Activated B cell treated with CpG ODN at 0.5 μM for 24 hours (primary cell): ENCODE measurements at regions of chr12 and their contacts with region 1.

Region 1: DNA sequence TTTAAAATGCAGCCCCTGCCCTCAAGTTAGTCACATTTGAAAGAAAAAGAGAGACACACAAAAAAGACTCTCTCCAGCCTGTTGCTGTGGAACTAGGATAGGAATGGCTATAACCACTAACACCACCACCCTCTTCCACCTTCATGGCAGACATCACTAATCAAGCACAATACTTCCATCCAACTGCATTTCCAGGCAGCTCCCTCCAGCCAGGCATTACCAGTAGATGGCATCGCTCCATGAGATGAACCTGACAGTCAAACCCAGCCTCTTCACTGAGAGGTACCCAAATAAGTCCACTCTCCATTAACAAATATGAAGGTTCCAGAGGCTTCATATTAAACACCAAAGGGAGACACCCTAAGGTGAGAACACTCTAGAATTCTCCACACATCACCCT is 24.4 kb downstream of the SLC8B1 start:
- DNase-seq: no peak
- ATAC-seq: no peak
- H3K4me3 Mint-ChIP-seq: no peak overlapping the region
- H3K27ac Mint-ChIP-seq: no peak overlapping the region
- H3K4me1 Mint-ChIP-seq: no peaks in the 10 kb centered on the region
- H3K27me3 Mint-ChIP-seq: no peaks in the 10 kb centered on the region
- CTCF ChIP-seq: no peak

Region 2: GRCh38 chr12:111927346-111927745 is 1383.1 kb before region 1 on chr12:
- CTCF ChIA-PET with region 1: no interaction called
- POLR2A ChIA-PET with region 1: no interaction called
- intact Hi-C with region 1: no loop called
- DNase-seq: no peak
- ATAC-seq: no peak
- H3K4me3 Mint-ChIP-seq: no peak overlapping the region
- H3K27ac Mint-ChIP-seq: no peak overlapping the region
- H3K4me1 Mint-ChIP-seq: no peaks in the 10 kb centered on the region
- H3K27me3 Mint-ChIP-seq: no peaks in the 10 kb centered on the region
- CTCF ChIP-seq: no peak

Region 3: GRCh38 chr12:113422030-113422885 is 111.8 kb after region 1 on chr12 and contains the start of gene SDSL:
- CTCF ChIA-PET with region 1: interaction called, 6 read pairs
- POLR2A ChIA-PET with region 1: no interaction called
- intact Hi-C with region 1: loop called (anchors 1 kb)
- DNase-seq: peak; percentile 41
- ATAC-seq: peak; percentile 92
- H3K4me3 Mint-ChIP-seq: peak within 1 kb of the TSS; percentile 67
- H3K27ac Mint-ChIP-seq: peak within 1 kb of the TSS; percentile 68
- H3K4me1 Mint-ChIP-seq: peaks cover 25% of the 10 kb centered on the region
- H3K27me3 Mint-ChIP-seq: peaks cover 14% of the 10 kb centered on the region
- CTCF ChIP-seq: no peak
- total RNA-seq, gene SDSL: 0.20 and 1.2 TPM in 2 replicates